ENCODE measurements at regions of chr1 and their contacts with region 1.

Region 1: DNA sequence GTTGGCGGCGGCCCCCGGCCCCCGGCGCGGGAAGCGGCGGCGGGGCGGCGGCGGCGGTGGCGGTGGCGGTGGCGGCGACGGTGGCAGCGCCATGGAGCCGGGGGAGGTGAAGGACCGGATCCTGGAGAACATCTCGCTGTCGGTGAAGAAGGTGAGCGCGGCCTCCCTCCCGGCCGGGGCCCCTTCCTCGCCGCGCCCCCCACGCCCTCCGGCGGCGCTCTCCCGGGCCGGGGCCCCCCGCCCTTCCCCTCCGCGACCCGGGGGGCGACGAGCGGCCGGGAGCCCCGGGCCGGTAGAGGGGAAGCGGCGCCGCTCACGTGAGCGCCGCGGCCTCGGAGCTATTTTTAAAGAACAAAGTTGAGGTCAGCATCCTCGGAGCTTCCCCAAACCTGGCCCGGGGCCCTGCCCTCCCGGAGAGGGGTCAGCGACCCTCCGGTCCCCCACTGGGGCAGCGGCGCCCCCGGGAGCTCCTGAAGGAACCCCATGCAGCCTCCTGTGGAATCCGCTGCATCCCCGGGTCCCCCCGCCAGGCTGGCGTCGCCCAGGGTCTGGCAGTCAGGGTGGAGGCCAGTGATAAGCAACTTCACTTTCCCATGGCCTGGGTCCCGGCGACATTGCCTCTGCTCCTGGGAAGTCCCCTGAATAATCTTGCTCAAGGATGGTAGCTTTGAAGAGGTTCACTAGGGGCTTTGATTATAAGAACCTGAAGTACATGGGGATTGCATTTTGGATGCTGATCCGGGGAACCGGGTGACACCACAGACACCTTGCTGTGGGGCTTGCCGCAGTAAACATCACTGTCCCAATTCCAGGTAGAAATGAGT is 560 bp downstream of the PLEKHM2 start:
- DNase-seq: peak in 8 of 9 experiments; percentile 5 to 68 (median 40)
- ATAC-seq: peak; percentile 50
- H3K4me3 ChIP-seq: peak overlapping the region; percentile 74 to 81
- H3K4me3 Mint-ChIP-seq: peak overlapping the region; percentile 90
- H3K27ac ChIP-seq: peak overlapping the region; percentile 67 to 79
- H3K27ac Mint-ChIP-seq: peak overlapping the region; percentile 96
- H3K4me1 ChIP-seq: peaks cover 16% of the 10 kb centered on the region
- H3K4me1 Mint-ChIP-seq: peaks cover 31% of the 10 kb centered on the region
- H3K27me3 ChIP-seq: no peaks in the 10 kb centered on the region
- H3K27me3 Mint-ChIP-seq: no peaks in the 10 kb centered on the region
- CTCF ChIP-seq: no peak

Region 2: GRCh38 chr1:15603050-15603965 is 81.4 kb before region 1 on chr1:
- CTCF ChIA-PET with region 1: no interaction called
- POLR2A ChIA-PET with region 1: no interaction called
- intact Hi-C with region 1: loop called in 1 of 2 experiments (anchors 5 kb)
- DNase-seq: peak; percentile 82 to 97 (median 92)
- ATAC-seq: peak; percentile 94
- H3K4me3 ChIP-seq: peak overlapping the region; percentile 77 to 79
- H3K4me3 Mint-ChIP-seq: peak overlapping the region; percentile 69
- H3K27ac ChIP-seq: peak overlapping the region; percentile 57 to 77
- H3K27ac Mint-ChIP-seq: peak overlapping the region; percentile 75
- H3K4me1 ChIP-seq: peaks cover 5% of the 10 kb centered on the region
- H3K4me1 Mint-ChIP-seq: peaks cover 12% of the 10 kb centered on the region
- H3K27me3 ChIP-seq: no peaks in the 10 kb centered on the region
- H3K27me3 Mint-ChIP-seq: no peaks in the 10 kb centered on the region
- CTCF ChIP-seq: no peak

Region 3: GRCh38 chr1:15696956-15697521 is 12.4 kb after region 1 on chr1:
- CTCF ChIA-PET with region 1: interaction called, 5 read pairs
- POLR2A ChIA-PET with region 1: interaction called, 14 read pairs
- intact Hi-C with region 1: loop called in 1 of 2 experiments (anchors 1 kb)
- DNase-seq: peak in 8 of 9 experiments; percentile 7 to 79 (median 39)
- ATAC-seq: peak; percentile 84
- H3K4me3 ChIP-seq: peak overlapping the region; percentile 36 to 44
- H3K4me3 Mint-ChIP-seq: peak overlapping the region; percentile 87
- H3K27ac ChIP-seq: peak overlapping the region; percentile 54 to 74
- H3K27ac Mint-ChIP-seq: peak overlapping the region; percentile 96
- H3K4me1 ChIP-seq: peaks cover 21% of the 10 kb centered on the region
- H3K4me1 Mint-ChIP-seq: peaks cover 50% of the 10 kb centered on the region
- H3K27me3 ChIP-seq: no peaks in the 10 kb centered on the region
- H3K27me3 Mint-ChIP-seq: no peaks in the 10 kb centered on the region
- CTCF ChIP-seq: no peak